Activated B cell treated with CpG ODN at 0.5 μM for 24 hours (primary cell): ENCODE measurements at regions of chr5 and their contacts with region 1.

Region 1: GRCh38 chr5:10635257-10635866 is 71.5 kb downstream of the ANKRD33B start:
- DNase-seq: peak; percentile 57
- ATAC-seq: peak; percentile 64
- H3K4me3 Mint-ChIP-seq: peak overlapping the region; percentile 82
- H3K27ac Mint-ChIP-seq: peak overlapping the region; percentile 99
- H3K4me1 Mint-ChIP-seq: peaks cover 81% of the 10 kb centered on the region
- H3K27me3 Mint-ChIP-seq: no peaks in the 10 kb centered on the region
- CTCF ChIP-seq: no peak

Region 2: DNA sequence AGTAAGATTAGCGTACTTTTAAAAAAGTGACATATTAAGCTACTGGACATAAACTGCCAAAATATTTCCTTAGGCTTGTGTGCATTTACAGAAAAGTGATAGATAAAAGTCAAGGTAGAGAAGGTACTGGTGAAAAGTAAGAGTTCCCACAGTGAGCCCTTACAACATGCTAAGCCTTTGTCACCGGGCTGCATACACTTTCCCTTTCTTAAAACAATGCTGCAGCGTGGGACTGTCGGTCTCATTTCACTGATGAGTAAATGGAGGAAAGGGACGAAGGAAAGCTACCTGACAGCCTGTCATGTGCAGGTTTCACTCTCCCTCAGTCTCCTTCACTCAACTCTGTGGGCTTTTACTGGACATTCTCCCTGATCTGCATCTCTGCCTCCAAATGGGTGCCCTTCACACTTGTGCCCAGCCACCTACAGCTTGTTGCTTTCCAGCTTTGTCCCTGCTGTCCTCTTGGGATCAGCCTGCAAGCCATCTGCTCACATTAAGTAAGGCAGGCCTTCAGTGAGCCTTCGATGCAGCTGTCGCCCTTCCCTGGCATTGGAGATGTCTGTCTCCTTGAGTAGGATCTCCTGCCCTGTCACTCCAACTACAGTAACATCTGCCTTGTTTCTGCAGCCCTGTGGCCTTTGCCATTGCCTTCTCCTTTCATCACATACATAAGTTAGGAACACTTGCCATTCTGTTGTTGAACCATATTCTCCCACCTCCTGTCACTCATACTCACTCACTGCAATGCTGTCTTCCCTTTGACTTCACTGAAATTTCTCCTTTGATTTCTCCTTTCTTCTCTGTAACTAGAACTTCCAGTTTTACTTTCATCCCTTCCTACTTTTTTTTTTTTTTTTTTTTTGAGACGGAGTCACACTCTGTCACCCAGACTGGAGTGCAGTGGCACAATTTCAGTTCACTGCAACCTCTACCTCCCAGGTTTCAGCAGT is 203.0 kb before region 1 on chr5:
- CTCF ChIA-PET with region 1: no interaction called
- POLR2A ChIA-PET with region 1: no interaction called
- intact Hi-C with region 1: no loop called
- DNase-seq: no peak
- ATAC-seq: no peak
- H3K4me3 Mint-ChIP-seq: no peak overlapping the region
- H3K27ac Mint-ChIP-seq: peak overlapping the region; percentile 2
- H3K4me1 Mint-ChIP-seq: no peaks in the 10 kb centered on the region
- H3K27me3 Mint-ChIP-seq: no peaks in the 10 kb centered on the region
- CTCF ChIP-seq: no peak

Region 3: GRCh38 chr5:10452768-10453331 is 182.5 kb before region 1 on chr5:
- CTCF ChIA-PET with region 1: interaction called, 16 read pairs
- POLR2A ChIA-PET with region 1: no interaction called
- intact Hi-C with region 1: no loop called
- DNase-seq: no peak
- ATAC-seq: peak; percentile 94
- H3K4me3 Mint-ChIP-seq: no peak overlapping the region
- H3K27ac Mint-ChIP-seq: no peak overlapping the region
- H3K4me1 Mint-ChIP-seq: peaks cover 5% of the 10 kb centered on the region
- H3K27me3 Mint-ChIP-seq: no peaks in the 10 kb centered on the region
- CTCF ChIP-seq: peak; percentile 39

Region 4: DNA sequence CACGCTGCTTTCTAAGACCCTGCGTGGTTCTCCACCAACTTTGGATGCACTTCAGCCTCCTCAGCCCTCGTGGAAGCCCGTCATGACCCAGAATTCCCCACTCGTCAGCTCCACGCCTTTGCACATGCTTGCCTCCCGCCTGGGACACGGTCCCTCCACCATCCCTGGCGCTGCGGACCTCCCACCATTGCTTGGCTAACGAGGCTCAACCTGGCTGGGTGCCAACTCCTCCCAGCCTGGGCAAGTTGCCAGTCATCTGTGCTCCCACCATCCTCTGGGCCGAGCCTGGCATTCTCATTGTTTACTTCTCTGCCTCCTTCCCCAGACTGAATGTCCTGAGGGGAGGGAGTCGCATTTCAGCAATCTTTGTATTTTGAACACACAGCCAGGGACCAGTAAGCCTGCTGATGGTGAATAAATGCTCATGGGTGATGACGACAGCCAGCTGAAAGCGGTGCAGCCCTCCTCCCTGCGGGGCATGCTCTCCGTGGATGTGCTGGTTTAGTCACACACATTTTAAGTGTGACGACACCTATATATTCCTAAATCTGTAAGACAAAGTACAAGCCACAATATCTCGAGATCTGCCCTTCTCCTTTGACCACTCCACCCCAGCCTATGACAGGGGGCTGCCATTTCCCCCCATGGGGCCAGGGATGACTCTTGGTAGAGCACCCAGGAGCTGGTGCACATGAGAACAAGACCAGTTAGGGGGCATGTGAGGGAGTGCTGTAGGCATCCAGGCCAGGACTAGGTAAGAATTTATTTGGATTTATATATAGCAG is 33.9 kb before region 1 on chr5:
- CTCF ChIA-PET with region 1: no interaction called
- POLR2A ChIA-PET with region 1: interaction called, 43 read pairs
- intact Hi-C with region 1: loop called (anchors 1 kb)
- DNase-seq: no peak
- ATAC-seq: peak; percentile 63
- H3K4me3 Mint-ChIP-seq: peak overlapping the region; percentile 72
- H3K27ac Mint-ChIP-seq: peak overlapping the region; percentile 84
- H3K4me1 Mint-ChIP-seq: peaks cover 66% of the 10 kb centered on the region
- H3K27me3 Mint-ChIP-seq: no peaks in the 10 kb centered on the region
- CTCF ChIP-seq: no peak

Region 5: DNA sequence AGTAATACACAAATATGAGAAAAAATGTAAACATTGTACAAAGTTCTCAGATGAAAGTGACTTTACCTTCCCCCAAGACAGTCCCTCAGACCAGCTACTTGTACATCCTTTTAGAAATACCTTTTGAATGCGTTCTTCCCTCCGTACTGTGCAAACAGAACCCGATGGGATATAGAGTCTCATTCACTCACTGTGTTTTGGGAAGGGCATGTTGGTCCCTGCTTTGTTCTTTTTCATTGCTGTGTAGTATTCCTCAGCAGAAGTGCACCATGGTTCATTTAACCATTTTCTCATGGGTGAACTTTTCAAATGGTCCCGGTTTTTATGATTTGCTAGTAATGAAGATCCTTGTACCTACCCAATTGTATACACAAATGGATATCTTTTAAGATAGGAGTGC is 22.9 kb after region 1 on chr5:
- CTCF ChIA-PET with region 1: interaction called, 3 read pairs
- POLR2A ChIA-PET with region 1: interaction called, 3 read pairs
- intact Hi-C with region 1: loop called (anchors 2 kb)
- DNase-seq: no peak
- ATAC-seq: no peak
- H3K4me3 Mint-ChIP-seq: no peak overlapping the region
- H3K27ac Mint-ChIP-seq: no peak overlapping the region
- H3K4me1 Mint-ChIP-seq: peaks cover 13% of the 10 kb centered on the region
- H3K27me3 Mint-ChIP-seq: no peaks in the 10 kb centered on the region
- CTCF ChIP-seq: no peak

Region 6: DNA sequence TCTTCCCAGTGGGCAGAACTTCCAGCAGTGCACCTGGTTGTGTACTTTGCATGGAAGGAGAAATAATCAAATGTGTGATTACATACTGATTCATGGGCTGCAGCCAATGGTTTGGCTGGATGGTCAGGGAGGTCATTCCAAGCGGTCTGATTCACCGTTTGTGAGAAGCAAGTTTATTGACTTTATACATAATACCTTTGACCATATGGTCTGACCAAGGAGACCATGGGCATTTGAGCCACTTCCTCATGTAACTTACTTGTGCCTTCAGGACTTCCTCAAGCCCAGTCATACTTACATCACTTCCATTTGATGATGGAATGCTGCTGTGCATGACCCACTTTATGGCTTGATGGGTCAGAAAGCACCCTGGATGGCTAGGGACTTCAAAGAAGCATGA is 84.6 kb after region 1 on chr5:
- CTCF ChIA-PET with region 1: no interaction called
- POLR2A ChIA-PET with region 1: no interaction called
- intact Hi-C with region 1: no loop called
- DNase-seq: no peak
- ATAC-seq: no peak
- H3K4me3 Mint-ChIP-seq: no peak overlapping the region
- H3K27ac Mint-ChIP-seq: no peak overlapping the region
- H3K4me1 Mint-ChIP-seq: no peaks in the 10 kb centered on the region
- H3K27me3 Mint-ChIP-seq: no peaks in the 10 kb centered on the region
- CTCF ChIP-seq: no peak

Region 7: GRCh38 chr5:10735569-10736276 is 100.4 kb after region 1 on chr5:
- CTCF ChIA-PET with region 1: no interaction called
- POLR2A ChIA-PET with region 1: interaction called, 3 read pairs
- intact Hi-C with region 1: loop called (anchors 10 kb)
- DNase-seq: peak; percentile 32
- ATAC-seq: peak; percentile 92
- H3K4me3 Mint-ChIP-seq: no peak overlapping the region
- H3K27ac Mint-ChIP-seq: peak overlapping the region; percentile 54
- H3K4me1 Mint-ChIP-seq: peaks cover 46% of the 10 kb centered on the region
- H3K27me3 Mint-ChIP-seq: no peaks in the 10 kb centered on the region
- CTCF ChIP-seq: no peak